Naive thymus-derived CD4-positive, alpha-beta T cell (primary cell): ENCODE measurements at regions of chr2 and their contacts with region 1.

Region 1: DNA sequence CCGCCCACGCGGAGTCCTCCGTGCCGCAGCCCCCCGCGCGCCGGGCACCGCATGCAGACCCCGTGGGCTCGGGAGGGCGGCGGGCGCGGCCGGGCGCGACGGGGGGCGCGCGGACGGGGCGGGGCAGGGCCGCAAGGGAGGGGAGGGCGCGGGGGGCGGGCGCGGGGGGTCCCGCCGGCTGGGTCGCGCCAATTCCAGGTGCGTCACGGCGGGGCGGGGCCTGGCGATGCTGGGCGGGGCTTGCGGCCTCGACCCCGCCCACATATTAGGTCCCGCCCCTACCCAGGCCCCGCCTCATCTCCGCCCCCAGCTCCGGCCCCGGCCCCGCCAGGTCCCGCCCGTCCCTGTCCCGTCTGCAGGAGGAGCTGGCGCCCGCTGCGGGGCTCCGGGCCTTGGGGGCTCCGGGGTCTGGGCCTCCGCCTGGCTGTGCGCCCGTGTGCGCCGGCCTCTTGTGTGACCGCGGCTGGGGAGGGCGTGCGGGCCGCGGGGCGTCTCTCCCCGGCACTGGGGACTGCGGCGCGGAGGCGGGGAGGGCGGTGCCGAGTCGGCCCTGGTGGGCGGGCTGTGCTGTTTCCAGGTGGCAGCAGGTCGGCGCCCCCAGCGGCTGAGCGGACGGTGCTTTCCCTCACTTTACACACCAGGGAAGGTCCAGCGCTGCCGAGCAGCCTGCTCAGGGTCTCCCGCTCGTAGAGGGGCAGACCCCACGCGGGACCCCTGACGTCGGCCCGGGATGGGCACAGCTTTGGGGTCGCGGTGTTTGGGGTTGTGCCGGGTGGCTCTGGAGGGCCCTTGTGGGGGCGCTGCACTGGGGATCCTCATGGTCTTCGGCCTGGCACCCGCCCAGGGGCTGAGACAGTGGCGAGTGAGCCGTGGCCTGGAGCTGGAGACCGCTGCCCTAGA is 543 bp downstream of the ING5 start:
- DNase-seq: peak; percentile 83 to 92 (median 89)
- ATAC-seq: peak; percentile 89
- H3K4me3 ChIP-seq: peak overlapping the region; percentile 74
- H3K4me3 Mint-ChIP-seq: peak overlapping the region; percentile 74 to 89 (median 84)
- H3K27ac ChIP-seq: peak overlapping the region; percentile 75
- H3K27ac Mint-ChIP-seq: peak overlapping the region; percentile 75 to 87 (median 82)
- H3K4me1 ChIP-seq: peaks cover 7 to 12% of the 10 kb centered on the region in 2 donors
- H3K4me1 Mint-ChIP-seq: peaks cover 11 to 38% (median 26%) of the 10 kb centered on the region in 7 donors
- H3K27me3 ChIP-seq: no peaks in the 10 kb centered on the region
- H3K27me3 Mint-ChIP-seq: no peaks in the 10 kb centered on the region

Region 2: GRCh38 chr2:240326246-240326645 is 1376.1 kb before region 1 on chr2:
- CTCF ChIA-PET with region 1: no interaction called
- POLR2A ChIA-PET with region 1: no interaction called
- intact Hi-C with region 1: no loop called
- DNase-seq: no peak
- ATAC-seq: no peak
- H3K4me3 ChIP-seq: no peak overlapping the region
- H3K4me3 Mint-ChIP-seq: no peak overlapping the region
- H3K27ac ChIP-seq: no peak overlapping the region
- H3K27ac Mint-ChIP-seq: no peak overlapping the region
- H3K4me1 ChIP-seq: no peaks in the 10 kb centered on the region
- H3K4me1 Mint-ChIP-seq: peaks cover 0 to 1% (median 0%) of the 10 kb centered on the region in 7 donors
- H3K27me3 ChIP-seq: no peaks in the 10 kb centered on the region
- H3K27me3 Mint-ChIP-seq: peaks cover 0 to 11% (median 7%) of the 10 kb centered on the region in 5 donors

Region 3: DNA sequence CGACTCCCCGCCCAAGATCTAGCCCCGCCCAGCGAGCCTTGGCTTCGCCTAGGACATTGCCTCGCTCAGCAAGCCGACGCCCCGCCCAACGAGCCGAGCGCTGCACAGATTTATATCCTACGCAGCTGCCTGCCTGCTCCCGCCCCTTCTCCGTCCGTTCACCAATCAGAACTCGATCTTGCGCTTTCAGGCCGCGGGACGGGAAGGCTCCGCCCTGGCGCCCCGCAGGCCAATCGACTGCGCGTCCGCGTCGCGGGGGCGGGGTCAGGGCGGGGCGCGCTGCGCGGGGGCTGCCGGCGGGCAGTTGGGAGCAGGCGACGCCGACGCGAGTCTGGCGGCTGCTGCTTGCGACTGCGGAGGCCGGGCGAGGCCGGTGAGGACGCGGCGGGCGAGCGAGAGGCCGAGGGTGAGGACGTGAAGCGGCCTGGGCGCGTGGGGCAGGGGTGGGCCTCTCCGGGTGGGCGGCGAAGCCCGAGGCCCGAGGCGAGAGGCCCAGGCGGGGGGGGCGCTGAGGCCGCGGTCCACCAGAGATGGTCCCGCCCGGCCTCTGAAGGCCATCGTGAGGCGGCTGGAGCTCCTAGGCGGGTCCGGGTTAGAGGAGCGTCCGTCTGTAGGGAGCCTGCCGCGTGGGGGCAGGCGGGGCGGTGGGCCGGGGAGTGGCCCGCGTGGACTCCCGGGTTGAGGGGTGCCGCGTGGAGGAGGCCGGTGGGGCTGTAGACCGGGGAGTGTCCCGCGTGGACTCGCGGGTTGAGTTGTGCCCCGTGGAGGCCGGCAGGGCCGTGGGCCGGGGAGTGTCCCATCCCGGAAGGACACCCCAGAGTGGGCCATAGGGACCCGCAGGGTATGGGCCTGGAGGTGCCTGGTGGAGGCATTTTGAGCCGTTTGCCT is 346.2 kb before region 1 on chr2 and contains the start of gene FARP2:
- CTCF ChIA-PET with region 1: no interaction called
- POLR2A ChIA-PET with region 1: no interaction called
- intact Hi-C with region 1: loop called (anchors 1 kb)
- DNase-seq: peak; percentile 91 to 99 (median 97)
- ATAC-seq: peak; percentile 93
- H3K4me3 ChIP-seq: peak within 1 kb of the TSS; percentile 54
- H3K4me3 Mint-ChIP-seq: peak within 1 kb of the TSS; percentile 75 to 92 (median 85)
- H3K27ac ChIP-seq: peak within 1 kb of the TSS; percentile 72
- H3K27ac Mint-ChIP-seq: peak within 1 kb of the TSS in 8 of 9 donors; percentile 80 to 95 (median 90)
- H3K4me1 ChIP-seq: peaks cover 6 to 7% of the 10 kb centered on the region in 2 donors
- H3K4me1 Mint-ChIP-seq: peaks cover 5 to 34% (median 19%) of the 10 kb centered on the region in 7 donors
- H3K27me3 ChIP-seq: no peaks in the 10 kb centered on the region
- H3K27me3 Mint-ChIP-seq: no peaks in the 10 kb centered on the region
- total RNA-seq, gene FARP2: 12.4 to 31.0 (median 22.1) TPM

Region 4: DNA sequence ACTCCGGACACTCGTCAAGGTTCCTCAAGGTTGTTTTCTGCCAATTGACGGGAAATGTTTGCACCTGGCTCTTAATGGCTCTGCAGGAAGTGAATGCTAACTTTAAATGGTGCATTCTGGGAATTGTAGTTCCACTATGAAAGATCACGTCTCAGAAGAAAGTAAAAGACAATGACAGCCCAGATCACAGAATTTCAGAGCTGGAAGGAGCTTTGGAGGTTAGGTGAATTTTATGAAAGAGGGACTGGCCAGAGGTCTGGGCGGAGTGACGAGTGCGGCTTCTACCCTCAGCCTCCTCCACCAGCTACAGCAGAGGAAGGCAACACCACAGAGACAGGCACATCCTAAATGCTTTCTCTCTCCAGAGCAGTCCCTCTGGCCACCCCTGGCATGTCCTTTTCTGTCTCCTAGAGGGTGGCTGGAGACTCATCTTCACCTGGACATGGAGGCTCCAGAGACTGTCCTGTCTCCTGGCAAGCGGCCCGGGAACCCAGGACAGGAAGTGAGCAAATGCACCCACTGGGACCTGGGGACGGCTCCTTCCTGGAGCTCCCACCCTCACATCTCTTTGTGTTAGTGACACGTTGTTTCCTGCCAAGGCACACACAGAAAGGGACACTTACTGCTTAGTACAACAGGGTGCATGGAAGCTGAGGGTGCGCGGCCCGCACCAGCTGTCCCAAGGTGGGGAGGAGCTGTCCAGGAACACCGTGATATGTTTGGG is 84.8 kb before region 1 on chr2:
- CTCF ChIA-PET with region 1: no interaction called
- POLR2A ChIA-PET with region 1: interaction called, 6 read pairs
- intact Hi-C with region 1: loop called (anchors 1 kb)
- DNase-seq: peak in 8 of 9 donors; percentile 41 to 71 (median 60)
- ATAC-seq: peak; percentile 77
- H3K4me3 ChIP-seq: peak overlapping the region; percentile 68
- H3K4me3 Mint-ChIP-seq: peak overlapping the region; percentile 79 to 96 (median 91)
- H3K27ac ChIP-seq: peak overlapping the region; percentile 75
- H3K27ac Mint-ChIP-seq: peak overlapping the region; percentile 85 to 98 (median 94)
- H3K4me1 ChIP-seq: peaks cover 13 to 18% of the 10 kb centered on the region in 2 donors
- H3K4me1 Mint-ChIP-seq: peaks cover 23 to 49% (median 43%) of the 10 kb centered on the region in 7 donors
- H3K27me3 ChIP-seq: no peaks in the 10 kb centered on the region
- H3K27me3 Mint-ChIP-seq: no peaks in the 10 kb centered on the region

Region 5: DNA sequence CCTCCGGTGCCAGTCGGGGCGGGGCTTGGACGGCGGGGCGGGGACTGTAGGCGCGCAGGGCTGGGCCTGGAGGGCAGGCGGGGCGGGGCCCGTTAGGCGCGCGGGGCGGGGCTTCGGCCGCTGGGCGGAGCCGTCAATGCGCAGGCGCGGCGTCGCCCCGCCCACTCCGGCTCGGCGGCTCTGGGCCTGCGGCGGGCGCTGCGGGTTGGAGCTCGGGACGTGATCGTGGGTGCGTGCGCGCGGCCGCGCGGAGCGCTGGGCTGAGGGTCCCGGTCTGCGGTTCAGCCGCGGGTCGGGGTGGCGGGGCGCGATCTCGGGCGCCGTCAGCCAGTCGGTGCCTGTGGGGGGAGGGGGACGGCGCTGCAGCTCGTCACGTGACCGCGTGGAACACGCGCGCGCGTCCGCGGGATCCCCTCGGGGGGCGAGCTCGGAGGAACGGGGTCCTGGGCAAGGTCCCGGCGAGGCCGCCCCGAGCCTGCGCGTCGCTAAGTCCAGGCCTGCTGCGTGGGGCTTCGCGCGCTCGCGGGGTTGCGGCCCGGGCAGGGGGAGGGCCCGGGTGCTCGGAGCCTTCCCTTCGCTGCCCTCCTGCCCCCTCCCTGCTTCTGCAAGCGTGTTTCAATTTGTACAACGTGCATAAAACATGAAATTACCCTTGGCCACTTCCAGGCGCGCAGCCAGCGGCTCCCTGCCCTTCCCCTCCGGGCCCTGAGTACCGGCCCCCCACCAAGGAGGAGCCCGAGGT is 32.3 kb after region 1 on chr2 and contains the start of gene D2HGDH:
- CTCF ChIA-PET with region 1: interaction called, 5 read pairs
- POLR2A ChIA-PET with region 1: interaction called, 22 read pairs
- intact Hi-C with region 1: loop called (anchors 1 kb)
- DNase-seq: peak; percentile 85 to 99 (median 91)
- ATAC-seq: peak; percentile 98
- H3K4me3 ChIP-seq: peak within 1 kb of the TSS; percentile 88
- H3K4me3 Mint-ChIP-seq: peak within 1 kb of the TSS; percentile 79 to 89 (median 84)
- H3K27ac ChIP-seq: peak within 1 kb of the TSS; percentile 75
- H3K27ac Mint-ChIP-seq: peak within 1 kb of the TSS in 8 of 9 donors; percentile 40 to 79 (median 72)
- H3K4me1 ChIP-seq: peaks cover 9% of the 10 kb centered on the region in 2 donors
- H3K4me1 Mint-ChIP-seq: peaks cover 9 to 54% (median 43%) of the 10 kb centered on the region in 7 donors
- H3K27me3 ChIP-seq: no peaks in the 10 kb centered on the region
- H3K27me3 Mint-ChIP-seq: no peaks in the 10 kb centered on the region
- total RNA-seq, gene D2HGDH: 32.5 to 49.8 (median 41.1) TPM